Spleen (tissue), 13 donors: ENCODE measurements at regions of chr14 and their contacts with region 1.

Region 1: GRCh38 chr14:103391048-103391447 is 5.8 kb downstream of the MARK3 start:
- DNase-seq: no peak
- H3K4me3 ChIP-seq: no peak overlapping the region
- H3K27ac ChIP-seq: peak overlapping the region in 5 of 8 donors; percentile 31 to 64 (median 45)
- H3K4me1 ChIP-seq: peaks cover 75 to 98% (median 89%) of the 10 kb centered on the region in 6 donors
- H3K27me3 ChIP-seq: no peaks in the 10 kb centered on the region
- CTCF ChIP-seq: peak in 10 of 11 experiments; percentile 18 to 67 (median 54)
- POLR2A ChIP-seq: no peak

Region 2: GRCh38 chr14:103243764-103244737 is 147.0 kb before region 1 on chr14:
- intact Hi-C with region 1: no loop called
- DNase-seq: no peak
- H3K4me3 ChIP-seq: no peak overlapping the region
- H3K27ac ChIP-seq: no peak overlapping the region
- H3K4me1 ChIP-seq: peaks cover 0 to 15% (median 4%) of the 10 kb centered on the region in 6 donors
- H3K27me3 ChIP-seq: peaks cover 0 to 18% (median 0%) of the 10 kb centered on the region in 7 donors
- CTCF ChIP-seq: no peak
- POLR2A ChIP-seq: no peak

Region 3: DNA sequence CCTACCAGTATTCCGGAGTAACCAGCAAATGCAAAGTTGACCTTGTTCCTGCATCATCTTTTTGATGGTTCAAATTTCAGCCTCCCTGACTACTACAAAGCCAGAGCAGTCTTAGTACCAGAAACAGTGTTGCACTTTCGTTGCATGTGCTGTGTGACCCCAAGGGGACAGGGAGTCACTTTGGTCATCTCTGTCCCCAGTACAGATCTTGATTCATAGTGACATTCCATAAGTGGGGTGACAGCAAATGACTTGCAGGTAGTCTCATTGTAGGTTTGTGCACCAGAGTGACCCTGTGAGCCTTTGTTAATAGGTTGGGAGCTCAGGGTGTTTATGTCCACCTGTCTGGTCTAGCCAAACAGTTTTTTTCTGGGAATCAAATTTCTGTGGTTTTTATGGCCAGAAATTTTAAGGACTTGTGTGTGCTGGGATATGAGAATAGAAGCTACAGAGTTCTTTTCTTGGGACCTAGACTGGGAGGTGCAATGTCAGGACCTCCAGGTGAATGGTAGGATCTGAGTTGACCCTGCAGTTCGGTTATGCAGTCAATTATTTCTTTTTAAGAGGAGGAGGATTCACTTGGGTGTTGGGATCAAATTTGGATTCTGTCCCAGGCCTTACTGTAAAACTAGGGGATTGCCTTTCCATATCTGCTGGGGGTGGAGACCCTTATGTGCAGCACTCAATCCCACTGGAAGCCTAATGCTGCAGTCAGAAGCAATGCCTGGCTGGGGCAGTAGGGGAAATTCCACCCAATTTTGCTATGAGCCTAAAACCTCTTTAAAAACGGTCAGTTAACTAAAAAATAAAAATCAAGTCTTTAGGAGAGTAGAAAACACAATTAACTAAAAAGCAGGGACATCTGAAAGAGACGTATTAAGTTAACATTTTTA is 46.9 kb before region 1 on chr14:
- intact Hi-C with region 1: loop called (anchors 5 kb)
- DNase-seq: no peak
- H3K4me3 ChIP-seq: no peak overlapping the region
- H3K27ac ChIP-seq: peak overlapping the region in 1 of 8 donors; percentile 15
- H3K4me1 ChIP-seq: peaks cover 0 to 36% (median 11%) of the 10 kb centered on the region in 6 donors
- H3K27me3 ChIP-seq: no peaks in the 10 kb centered on the region
- CTCF ChIP-seq: no peak
- POLR2A ChIP-seq: no peak

Region 4: DNA sequence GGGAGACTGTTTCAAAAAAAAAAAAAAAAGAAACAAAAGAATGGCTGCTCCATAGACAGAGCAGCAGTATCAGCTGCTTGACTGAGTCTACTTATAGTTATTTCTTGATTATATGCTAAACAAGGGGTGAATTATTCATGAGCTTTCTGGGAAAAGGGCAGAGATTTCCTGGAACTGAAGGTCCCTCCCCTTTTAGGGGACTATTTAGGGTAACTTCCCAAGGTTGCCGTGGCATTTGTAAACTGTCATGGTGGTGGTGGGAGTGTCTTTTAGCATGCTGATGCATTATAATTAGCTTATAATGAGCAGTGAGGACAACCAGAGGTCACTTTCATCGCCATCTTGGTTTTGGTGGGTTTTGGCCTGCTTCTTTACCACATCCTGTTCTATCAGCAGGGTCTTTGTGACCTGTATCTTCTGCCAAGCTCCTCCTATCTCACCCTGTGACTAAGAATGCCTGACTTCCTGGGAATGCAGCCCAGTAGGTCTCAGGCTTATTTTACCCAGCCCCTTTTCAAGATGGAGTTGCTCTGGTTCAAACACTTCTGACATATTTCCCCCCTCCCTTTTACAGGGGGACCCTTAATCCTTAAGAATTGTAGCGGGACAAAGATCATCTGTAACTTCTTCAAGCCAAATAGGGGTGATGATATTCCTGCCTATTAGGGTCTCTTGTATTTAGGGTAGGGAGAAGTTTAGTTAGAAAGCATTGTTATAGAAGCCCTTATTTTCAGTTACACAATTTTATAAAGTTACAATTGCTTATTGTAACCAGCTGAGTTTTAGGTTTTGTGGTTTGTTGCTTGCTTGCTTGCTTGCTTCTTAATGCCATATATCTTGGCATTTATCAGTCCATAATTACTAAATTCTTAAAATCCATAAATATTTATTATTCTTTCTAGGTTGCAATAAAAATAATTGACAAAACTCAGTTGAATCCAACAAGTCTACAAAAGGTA is 36.7 kb after region 1 on chr14:
- intact Hi-C with region 1: no loop called
- DNase-seq: no peak
- H3K4me3 ChIP-seq: no peak overlapping the region
- H3K27ac ChIP-seq: peak overlapping the region; percentile 41 to 75 (median 60)
- H3K4me1 ChIP-seq: peaks cover 24 to 78% (median 30%) of the 10 kb centered on the region in 6 donors
- H3K27me3 ChIP-seq: no peaks in the 10 kb centered on the region
- CTCF ChIP-seq: no peak
- POLR2A ChIP-seq: no peak

Region 5: GRCh38 chr14:103472939-103473338 is 81.9 kb after region 1 on chr14:
- intact Hi-C with region 1: loop called (anchors 10 kb)
- DNase-seq: no peak
- H3K4me3 ChIP-seq: no peak overlapping the region
- H3K27ac ChIP-seq: no peak overlapping the region
- H3K4me1 ChIP-seq: peaks cover 0 to 7% (median 0%) of the 10 kb centered on the region in 6 donors
- H3K27me3 ChIP-seq: no peaks in the 10 kb centered on the region
- CTCF ChIP-seq: no peak
- POLR2A ChIP-seq: no peak